ENCODE measurements at regions of chr14 and their contacts with region 1.

Region 1: GRCh38 chr14:55440385-55440784 is at the start of gene TBPL2:
- DNase-seq: no peak
- ATAC-seq: peak; percentile 46
- total RNA-seq, gene TBPL2: not detected

Region 2: DNA sequence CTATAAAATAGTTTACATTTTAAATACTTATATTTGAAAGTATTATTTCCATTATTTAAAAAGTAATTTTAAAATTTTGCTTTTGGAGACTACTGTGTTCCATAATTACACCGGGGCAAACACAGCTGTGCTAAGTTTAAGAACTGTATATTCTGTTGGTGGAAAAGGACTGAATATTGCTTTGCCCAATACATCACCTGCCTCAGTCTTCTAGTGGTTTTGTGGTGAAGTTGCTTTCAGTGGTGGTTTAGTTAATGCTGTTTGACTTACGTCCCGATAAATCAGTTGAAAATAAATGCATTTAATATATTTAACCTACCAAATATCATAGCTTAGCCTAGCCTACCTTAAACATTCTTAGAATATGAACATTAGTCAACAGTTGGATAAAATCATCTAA is 145.8 kb before region 1 on chr14:
- intact Hi-C with region 1: no loop called
- DNase-seq: no peak
- ATAC-seq: no peak

Region 3: DNA sequence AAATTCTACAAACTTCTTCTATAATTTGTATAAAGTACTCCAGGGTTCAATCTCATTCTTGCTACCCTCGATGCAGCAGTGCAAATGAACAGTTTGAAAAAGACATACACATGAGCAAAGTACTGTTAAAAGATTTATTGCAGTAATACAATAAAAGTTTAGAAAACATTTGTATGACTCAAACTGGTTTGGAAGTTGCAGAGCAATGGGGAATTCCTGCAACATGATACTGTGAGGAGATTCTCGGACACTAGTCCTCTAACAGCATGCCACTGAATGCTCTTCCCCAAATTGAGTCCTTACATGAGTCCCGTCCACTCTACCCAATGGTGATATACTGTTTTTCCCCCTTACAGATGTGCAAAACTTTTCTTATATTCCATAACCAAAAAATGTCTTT is 74.1 kb before region 1 on chr14:
- intact Hi-C with region 1: no loop called
- DNase-seq: no peak
- ATAC-seq: no peak

Region 4: GRCh38 chr14:55572578-55572977 is 132.2 kb after region 1 on chr14:
- intact Hi-C with region 1: loop called (anchors 5 kb)
- DNase-seq: no peak
- ATAC-seq: peak; percentile 81

Measured in Right ventricle myocardium inferior (tissue), 1 donor.